Heart left ventricle (tissue), 16 donors: ENCODE measurements at regions of chr10 and their contacts with region 1.

Region 1: GRCh38 chr10:133318494-133319127 is 9.9 kb downstream of the ZNF511 start:
- DNase-seq: peak in 4 of 5 donors; percentile 56 to 82 (median 58)
- ATAC-seq: peak; percentile 68 to 92 (median 86)
- H3K4me3 ChIP-seq: peak overlapping the region in 10 of 12 donors; percentile 17 to 53 (median 39)
- H3K27ac ChIP-seq: no peak overlapping the region
- H3K4me1 ChIP-seq: peaks cover 0 to 9% (median 4%) of the 10 kb centered on the region in 12 donors
- H3K27me3 ChIP-seq: peaks cover 0 to 15% (median 6%) of the 10 kb centered on the region in 9 donors
- CTCF ChIP-seq: peak; percentile 45 to 73 (median 62)
- POLR2A ChIP-seq: no peak

Region 2: GRCh38 chr10:132836832-132837540 is 481.6 kb before region 1 on chr10:
- intact Hi-C with region 1: loop called in 2 of 10 experiments (anchors 5 to 10 kb)
- DNase-seq: peak in 1 of 5 donors; percentile 14
- ATAC-seq: peak in 3 of 4 donors; percentile 40 to 64 (median 59)
- H3K4me3 ChIP-seq: peak overlapping the region in 1 of 12 donors; percentile 3
- H3K27ac ChIP-seq: no peak overlapping the region
- H3K4me1 ChIP-seq: peaks cover 0 to 6% (median 0%) of the 10 kb centered on the region in 12 donors
- H3K27me3 ChIP-seq: peaks cover 10 to 55% (median 22%) of the 10 kb centered on the region in 9 donors
- CTCF ChIP-seq: peak; percentile 89 to 99 (median 96)
- POLR2A ChIP-seq: no peak

Region 3: DNA sequence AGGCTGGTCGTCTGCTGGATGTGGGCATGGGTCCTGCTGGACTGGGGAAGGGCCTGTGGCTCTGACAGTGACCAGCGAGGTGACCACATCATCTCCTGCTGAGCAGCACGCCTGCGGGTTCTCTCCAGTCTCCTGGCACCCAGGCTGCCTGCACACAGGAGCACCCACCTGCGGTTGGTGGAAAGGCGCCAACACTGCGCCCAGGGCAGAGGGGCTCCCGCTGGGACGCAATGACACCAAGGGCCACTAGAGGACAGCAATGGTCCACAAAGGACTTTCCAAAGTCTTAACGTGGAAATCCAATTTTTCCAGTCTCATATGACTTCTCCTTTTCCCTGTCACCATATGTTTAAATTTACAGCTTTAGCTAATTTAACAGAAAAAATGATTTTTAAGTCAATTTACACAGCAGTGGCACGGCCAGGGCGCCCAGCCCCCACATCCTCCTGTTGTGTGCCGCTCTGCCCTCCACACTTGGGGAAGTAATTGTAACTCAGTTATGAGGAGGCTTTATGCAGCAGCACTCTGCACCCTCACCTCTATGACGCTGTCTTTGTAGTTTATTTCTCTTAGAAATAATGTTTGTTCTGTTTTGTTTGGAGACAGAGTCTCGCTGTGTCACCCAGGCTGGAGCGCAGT is 414.3 kb before region 1 on chr10:
- intact Hi-C with region 1: loop called in 1 of 10 experiments (anchors 10 kb)
- DNase-seq: peak in 3 of 5 donors; percentile 5 to 39 (median 36)
- ATAC-seq: peak in 2 of 4 donors; percentile 26 to 65
- H3K4me3 ChIP-seq: no peak overlapping the region
- H3K27ac ChIP-seq: no peak overlapping the region
- H3K4me1 ChIP-seq: no peaks in the 10 kb centered on the region
- H3K27me3 ChIP-seq: peaks cover 0 to 5% (median 0%) of the 10 kb centered on the region in 9 donors
- CTCF ChIP-seq: peak; percentile 61 to 81 (median 67)
- POLR2A ChIP-seq: no peak

Region 4: GRCh38 chr10:133144771-133145170 is 173.8 kb before region 1 on chr10:
- intact Hi-C with region 1: loop called in 1 of 10 experiments (anchors 5 kb)
- DNase-seq: peak in 1 of 5 donors; percentile 4
- ATAC-seq: no peak
- H3K4me3 ChIP-seq: no peak overlapping the region
- H3K27ac ChIP-seq: no peak overlapping the region
- H3K4me1 ChIP-seq: peaks cover 0 to 6% (median 0%) of the 10 kb centered on the region in 12 donors
- H3K27me3 ChIP-seq: peaks cover 12 to 91% (median 30%) of the 10 kb centered on the region in 9 donors
- CTCF ChIP-seq: no peak
- POLR2A ChIP-seq: no peak

Region 5: DNA sequence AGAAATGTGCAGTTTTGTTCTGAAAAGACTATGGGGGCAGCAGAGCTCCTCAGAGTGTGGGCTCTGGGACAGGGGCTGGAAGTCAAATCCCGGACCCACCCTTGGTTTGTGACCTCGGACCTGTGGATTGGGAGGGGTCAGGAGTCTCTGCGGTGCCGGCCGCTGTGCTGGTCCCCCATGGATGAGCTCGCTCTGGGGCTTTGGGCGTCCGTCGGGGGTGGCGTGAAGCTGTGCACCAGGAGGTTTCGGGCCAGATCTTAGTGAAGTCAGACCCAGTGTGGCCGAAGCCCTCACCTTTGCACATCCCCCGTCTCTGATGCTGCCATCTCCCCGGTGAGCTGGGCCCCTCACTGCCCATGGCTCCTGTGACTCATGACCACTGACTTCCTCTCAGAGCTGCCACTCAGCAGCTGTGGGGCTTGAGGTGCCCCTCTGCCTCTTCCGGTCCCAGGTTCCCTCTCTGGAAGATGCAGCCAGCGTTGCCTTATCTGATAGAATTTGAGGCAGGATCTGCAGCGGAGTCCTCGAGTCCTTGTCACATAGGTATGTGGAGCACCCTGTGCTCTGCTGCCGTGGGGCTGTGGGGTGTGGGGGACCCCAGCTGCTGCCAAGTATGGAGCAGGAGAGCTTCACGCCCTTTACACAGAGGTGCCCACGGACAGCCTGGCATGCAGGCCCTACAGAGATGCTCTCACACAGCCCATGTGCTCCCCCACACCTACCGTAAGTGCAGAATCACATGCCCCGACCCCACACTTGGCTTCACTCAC is 123.8 kb after region 1 on chr10:
- intact Hi-C with region 1: no loop called
- DNase-seq: peak in 1 of 5 donors; percentile 52
- ATAC-seq: no peak
- H3K4me3 ChIP-seq: no peak overlapping the region
- H3K27ac ChIP-seq: no peak overlapping the region
- H3K4me1 ChIP-seq: peaks cover 0 to 6% (median 0%) of the 10 kb centered on the region in 12 donors
- H3K27me3 ChIP-seq: peaks cover 0 to 16% (median 0%) of the 10 kb centered on the region in 9 donors
- CTCF ChIP-seq: no peak
- POLR2A ChIP-seq: no peak

Region 6: GRCh38 chr10:133608855-133609254 is 290.2 kb after region 1 on chr10:
- intact Hi-C with region 1: loop called in 2 of 10 experiments (anchors 5 kb)
- DNase-seq: no peak
- ATAC-seq: no peak
- H3K4me3 ChIP-seq: no peak overlapping the region
- H3K27ac ChIP-seq: no peak overlapping the region
- H3K4me1 ChIP-seq: no peaks in the 10 kb centered on the region
- H3K27me3 ChIP-seq: peaks cover 0 to 57% (median 19%) of the 10 kb centered on the region in 9 donors
- CTCF ChIP-seq: peak in 11 of 12 donors; percentile 18 to 62 (median 53)
- POLR2A ChIP-seq: no peak